Head of caudate nucleus (tissue), 42 donors: ENCODE measurements at regions of chr11 and their contacts with region 1.

Region 1: GRCh38 chr11:75248690-75249268 is 8.2 kb downstream of the TPBGL start:
- DNase-seq: peak; percentile 77 to 95 (median 90)

Region 2: DNA sequence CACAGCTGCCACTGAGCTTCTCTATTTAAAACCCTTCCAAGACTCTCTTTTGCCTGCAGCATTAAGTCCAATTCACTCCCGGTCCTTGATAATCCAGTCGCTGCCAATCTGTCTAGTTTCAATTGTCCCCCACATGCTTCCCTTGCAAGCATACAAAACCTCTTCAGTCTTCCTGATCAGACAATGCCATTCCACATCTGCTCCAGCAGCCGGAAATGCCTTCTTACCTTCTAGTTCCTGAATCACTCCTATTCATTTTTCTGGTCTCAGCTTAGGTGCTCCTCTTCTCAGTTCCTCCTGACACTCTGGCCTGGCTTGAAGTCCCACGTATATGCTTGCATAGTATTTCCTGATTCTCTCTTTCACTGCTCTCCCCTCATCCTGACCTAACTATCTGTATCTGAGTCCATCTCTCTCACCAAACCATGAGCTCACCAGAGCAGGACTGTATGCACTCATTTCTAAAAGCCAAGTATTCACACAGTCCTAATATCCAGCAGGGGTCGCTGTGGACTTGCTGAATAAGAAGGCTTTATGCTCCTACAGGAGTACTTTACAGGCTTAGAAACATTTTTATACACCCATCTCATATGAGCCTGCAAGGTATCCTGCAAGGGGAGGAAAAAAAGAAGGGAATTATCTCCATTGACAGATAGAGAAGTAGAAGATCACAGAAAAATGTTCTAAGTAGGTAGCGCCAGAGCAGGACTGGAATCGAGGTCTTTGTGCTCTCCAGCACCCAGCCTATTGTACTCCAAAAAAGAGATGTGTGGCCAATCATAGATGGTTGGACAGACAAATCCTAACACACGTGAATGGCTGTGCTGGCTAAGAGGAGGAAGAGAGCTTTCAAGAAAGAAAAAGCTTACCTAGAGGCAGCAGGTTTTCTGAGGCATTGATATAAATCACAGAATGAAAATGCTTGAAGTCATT is 319.1 kb before region 1 on chr11:
- intact Hi-C with region 1: loop called (anchors 5 kb)
- DNase-seq: peak in 41 of 42 donors; percentile 34 to 92 (median 81)

Region 3: GRCh38 chr11:75022759-75023396 is 225.9 kb before region 1 on chr11:
- intact Hi-C with region 1: loop called (anchors 5 kb)
- DNase-seq: peak; percentile 42 to 94 (median 86)

Region 4: DNA sequence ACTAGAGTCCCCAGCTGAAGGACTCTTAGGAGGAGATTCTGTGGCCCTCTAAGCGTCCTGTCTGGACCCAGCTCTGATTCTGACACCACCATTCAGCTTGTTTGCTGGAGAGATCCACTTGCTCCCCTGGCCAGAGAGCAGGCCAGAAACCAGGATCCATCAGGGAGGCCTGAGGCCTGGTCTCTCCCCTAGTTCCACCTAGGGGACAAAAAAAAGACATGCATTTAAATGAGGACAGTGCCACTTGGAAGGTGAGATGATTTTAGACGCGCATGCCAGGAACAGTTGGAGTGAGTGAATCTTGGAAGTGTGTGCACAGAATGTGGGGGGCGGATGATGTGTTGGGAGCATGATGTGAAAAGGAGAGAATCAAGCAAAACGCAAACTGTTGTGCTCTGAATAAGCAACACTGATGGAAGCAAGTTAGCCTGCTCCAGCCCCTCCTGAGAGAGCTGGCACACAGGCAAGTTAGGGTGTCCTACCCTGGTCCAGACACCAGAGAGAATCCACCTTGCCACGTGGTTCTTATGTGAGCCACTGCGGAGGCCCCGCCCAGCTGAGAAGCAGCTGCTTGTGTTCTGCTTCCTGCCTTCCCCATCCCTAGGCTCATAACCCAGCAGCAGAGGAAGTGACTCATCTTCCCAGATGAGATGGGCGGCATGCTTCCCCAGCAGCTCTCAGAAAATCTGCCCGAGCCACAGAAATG is 105.9 kb before region 1 on chr11:
- intact Hi-C with region 1: loop called (anchors 2 kb)
- DNase-seq: peak; percentile 47 to 93 (median 78)

Region 5: GRCh38 chr11:75480185-75481175 is 231.7 kb after region 1 on chr11:
- intact Hi-C with region 1: no loop called
- DNase-seq: no peak